ENCODE measurements at regions of chr19 and their contacts with region 1.

Region 1: DNA sequence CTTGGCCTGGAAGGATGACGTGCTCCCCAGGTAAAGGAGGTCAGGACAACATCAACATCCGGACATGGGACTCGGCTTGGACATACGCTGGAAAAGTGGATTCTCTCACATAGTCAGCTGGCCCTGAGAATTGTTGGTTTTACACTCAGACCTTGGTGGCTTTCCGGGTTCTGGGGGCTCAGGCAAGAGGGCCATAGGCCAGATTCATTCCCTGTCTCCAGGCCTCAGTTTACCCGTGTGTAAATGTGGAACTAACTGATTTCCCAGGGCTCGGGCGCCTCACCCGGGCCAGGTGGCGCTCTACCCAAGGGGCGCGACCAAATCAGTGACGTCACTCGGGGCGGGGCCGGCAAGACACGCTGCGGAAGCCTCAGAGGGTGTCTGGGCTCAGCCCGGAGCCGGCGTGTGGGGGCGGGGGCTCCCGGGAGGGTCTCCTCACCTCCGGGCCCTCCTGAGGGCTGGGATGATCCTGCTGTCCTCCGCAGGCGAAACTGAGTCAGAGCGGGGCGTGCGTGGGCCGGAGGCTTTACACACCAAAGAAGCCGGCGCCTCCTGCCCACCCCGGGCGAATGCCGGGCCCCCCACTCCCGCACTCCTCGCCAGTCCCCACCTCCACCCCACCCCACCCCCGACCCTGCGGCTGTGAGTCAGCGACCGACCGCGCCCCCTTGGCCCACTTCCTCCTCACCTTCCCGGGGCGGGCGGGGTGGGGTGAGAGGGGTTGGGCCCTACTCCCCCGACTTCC is 861 bp upstream of the VASP start:
- DNase-seq: peak; percentile 100
- ATAC-seq: peak; percentile 80
- H3K4me3 Mint-ChIP-seq: peak overlapping the region; percentile 85
- H3K27ac Mint-ChIP-seq: peak overlapping the region; percentile 96
- H3K4me1 Mint-ChIP-seq: peaks cover 38% of the 10 kb centered on the region
- H3K27me3 Mint-ChIP-seq: no peaks in the 10 kb centered on the region

Region 2: DNA sequence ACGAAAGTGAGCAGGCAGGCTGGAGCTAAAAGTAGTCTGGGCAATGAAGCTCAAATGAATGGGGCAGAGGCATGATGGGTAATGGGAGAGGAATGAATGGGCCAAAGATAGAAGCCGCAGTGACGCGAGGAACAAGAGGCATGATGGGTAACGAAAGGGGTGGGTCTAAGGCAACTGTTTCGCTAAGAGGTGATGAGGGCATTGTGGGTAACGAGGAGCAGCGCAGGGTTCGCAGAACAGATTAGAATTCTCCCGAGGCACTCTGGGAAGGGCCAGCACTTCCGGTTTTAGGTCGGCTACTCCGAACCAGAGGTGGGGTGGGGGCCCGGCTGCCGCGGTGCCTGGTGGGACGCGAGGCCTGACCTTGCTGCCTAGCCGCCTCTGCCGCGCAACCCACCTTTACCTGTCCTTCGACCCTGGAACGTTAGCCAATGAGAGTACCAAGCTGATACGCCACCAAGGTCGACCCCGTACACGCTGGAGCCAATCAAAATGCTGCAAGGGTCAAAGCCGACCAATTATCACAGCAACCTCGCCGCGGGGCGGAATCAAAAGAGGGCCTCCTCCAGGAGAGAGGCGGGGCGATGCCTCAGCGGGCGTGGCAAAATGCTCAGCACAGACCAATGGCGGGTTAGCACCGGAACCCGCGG is 615.9 kb before region 1 on chr19:
- CTCF ChIA-PET with region 1: no interaction called
- POLR2A ChIA-PET with region 1: no interaction called
- intact Hi-C with region 1: loop called in 1 of 2 experiments (anchors 5 kb)
- DNase-seq: no peak
- ATAC-seq: peak; percentile 84
- H3K4me3 Mint-ChIP-seq: peak overlapping the region; percentile 74
- H3K27ac Mint-ChIP-seq: peak overlapping the region; percentile 96
- H3K4me1 Mint-ChIP-seq: peaks cover 29% of the 10 kb centered on the region
- H3K27me3 Mint-ChIP-seq: no peaks in the 10 kb centered on the region

Region 3: GRCh38 chr19:45424191-45425058 is 82.0 kb before region 1 on chr19:
- CTCF ChIA-PET with region 1: no interaction called
- POLR2A ChIA-PET with region 1: no interaction called
- intact Hi-C with region 1: no loop called
- DNase-seq: peak; percentile 68
- ATAC-seq: peak; percentile 67
- H3K4me3 Mint-ChIP-seq: peak overlapping the region; percentile 92
- H3K27ac Mint-ChIP-seq: peak overlapping the region; percentile 95
- H3K4me1 Mint-ChIP-seq: peaks cover 52% of the 10 kb centered on the region
- H3K27me3 Mint-ChIP-seq: peaks cover 2% of the 10 kb centered on the region

Region 4: GRCh38 chr19:45439569-45440254 is 66.7 kb before region 1 on chr19:
- CTCF ChIA-PET with region 1: interaction called, 13 read pairs
- POLR2A ChIA-PET with region 1: no interaction called
- intact Hi-C with region 1: no loop called
- DNase-seq: peak; percentile 90
- ATAC-seq: peak; percentile 70
- H3K4me3 Mint-ChIP-seq: peak overlapping the region; percentile 56
- H3K27ac Mint-ChIP-seq: peak overlapping the region; percentile 63
- H3K4me1 Mint-ChIP-seq: peaks cover 33% of the 10 kb centered on the region
- H3K27me3 Mint-ChIP-seq: no peaks in the 10 kb centered on the region

Region 5: DNA sequence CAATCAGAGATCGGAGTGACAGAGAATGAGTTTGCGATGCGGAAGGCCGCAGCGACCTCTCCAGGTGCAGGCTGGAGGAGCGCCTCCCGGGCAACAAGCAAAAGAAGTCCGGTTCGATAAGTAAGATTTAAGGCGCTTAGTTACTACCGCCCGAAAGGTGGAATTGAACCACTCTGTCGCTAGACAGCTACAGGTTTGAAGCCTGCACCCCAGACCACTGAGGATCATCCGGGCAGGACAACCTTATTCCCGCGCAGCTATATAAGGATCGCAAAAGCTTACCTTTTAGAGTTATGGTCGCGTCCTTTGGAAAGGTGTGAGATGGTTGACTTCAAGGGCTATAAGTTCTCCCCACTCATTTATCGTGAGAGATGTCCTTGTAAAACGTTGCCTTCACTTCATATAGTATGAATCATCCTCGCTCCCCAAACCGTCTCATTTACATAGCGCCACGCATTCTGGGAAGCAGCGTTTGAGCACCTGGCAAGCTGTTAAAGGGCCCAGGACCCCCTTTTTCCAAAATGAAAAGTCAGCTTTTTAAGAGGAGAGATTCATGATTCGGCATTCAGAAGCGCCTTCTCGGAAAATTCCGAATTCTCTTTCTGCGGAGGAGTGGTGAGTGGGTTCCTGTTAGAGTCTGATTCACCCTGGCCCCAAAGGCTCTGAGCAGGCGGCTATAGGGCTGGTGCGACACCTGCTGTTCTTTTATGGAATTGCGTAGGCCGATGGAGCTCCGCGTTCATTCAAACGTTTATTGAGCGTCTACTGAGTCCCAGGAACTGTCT is 27.8 kb before region 1 on chr19:
- CTCF ChIA-PET with region 1: interaction called, 5 read pairs
- POLR2A ChIA-PET with region 1: no interaction called
- intact Hi-C with region 1: loop called in 1 of 2 experiments (anchors 1 kb)
- DNase-seq: peak; percentile 95
- ATAC-seq: peak; percentile 86
- H3K4me3 Mint-ChIP-seq: peak overlapping the region; percentile 60
- H3K27ac Mint-ChIP-seq: peak overlapping the region; percentile 73
- H3K4me1 Mint-ChIP-seq: peaks cover 24% of the 10 kb centered on the region
- H3K27me3 Mint-ChIP-seq: peaks cover 4% of the 10 kb centered on the region

Region 6: DNA sequence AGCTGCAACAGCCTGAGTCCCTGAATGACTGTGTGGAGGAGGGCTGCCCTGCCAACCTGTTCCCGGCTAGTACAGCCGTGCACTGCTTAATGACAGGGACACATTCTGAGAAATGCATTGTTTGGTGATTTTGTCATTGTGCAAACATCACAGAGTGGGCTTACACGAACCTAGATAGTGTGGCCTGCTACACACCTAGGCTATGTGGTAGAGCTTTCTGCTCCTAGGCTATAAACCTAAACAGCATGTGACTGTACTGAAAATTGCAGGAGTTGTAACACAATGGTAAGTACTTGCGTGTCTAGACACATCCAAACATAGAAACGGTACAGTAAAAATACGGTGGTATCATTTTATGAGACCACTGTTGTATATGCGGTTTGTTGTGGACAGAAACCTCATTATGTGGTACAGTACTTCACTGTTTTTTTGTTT is 35.8 kb after region 1 on chr19:
- CTCF ChIA-PET with region 1: no interaction called
- POLR2A ChIA-PET with region 1: no interaction called
- intact Hi-C with region 1: no loop called
- DNase-seq: no peak
- ATAC-seq: no peak
- H3K4me3 Mint-ChIP-seq: no peak overlapping the region
- H3K27ac Mint-ChIP-seq: no peak overlapping the region
- H3K4me1 Mint-ChIP-seq: peaks cover 6% of the 10 kb centered on the region
- H3K27me3 Mint-ChIP-seq: no peaks in the 10 kb centered on the region

Region 7: DNA sequence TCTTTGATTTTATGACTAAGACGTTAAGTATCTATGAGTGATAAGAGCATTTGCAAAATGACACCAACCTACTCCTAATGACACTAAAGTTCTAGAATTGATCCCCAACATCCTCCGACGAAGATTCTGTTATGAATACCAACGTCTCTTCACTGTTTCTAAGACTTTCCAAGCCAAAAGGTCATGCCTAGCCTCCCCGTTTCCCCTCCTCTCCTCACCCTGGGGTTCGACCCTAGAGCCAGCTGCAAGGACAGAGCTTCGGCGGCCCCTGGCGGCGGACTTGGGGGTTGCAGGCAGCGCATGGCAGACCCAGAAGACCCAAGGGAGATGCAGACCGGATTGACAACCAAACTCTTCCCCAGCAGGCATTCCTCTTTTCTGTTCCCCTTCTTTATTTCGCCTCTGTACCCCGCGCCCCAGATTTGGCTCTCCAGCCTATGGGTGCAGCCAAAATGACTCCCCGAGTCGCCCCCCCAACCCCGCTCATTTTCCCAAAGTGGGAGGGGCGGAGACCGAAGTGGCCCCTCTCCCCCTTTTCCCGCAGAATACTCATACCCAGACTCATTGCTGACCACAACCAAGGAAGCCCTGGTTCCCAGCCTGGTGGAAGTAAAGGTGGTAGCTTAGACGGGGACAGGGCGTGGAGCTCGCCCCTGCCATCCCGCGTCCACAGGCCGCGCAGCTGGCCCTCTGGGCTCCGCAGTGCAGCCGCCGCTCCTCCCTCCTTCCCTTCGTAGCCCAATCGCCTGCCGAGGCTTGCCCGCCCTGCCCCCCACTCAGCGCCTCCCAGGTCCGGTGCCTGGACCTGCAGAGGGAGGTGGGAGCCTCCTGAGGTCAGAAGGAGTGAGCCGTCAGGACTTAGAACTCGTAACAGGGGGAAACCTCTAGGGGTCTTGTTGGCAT is 136.9 kb after region 1 on chr19:
- CTCF ChIA-PET with region 1: interaction called, 6 read pairs
- POLR2A ChIA-PET with region 1: interaction called, 4 read pairs
- intact Hi-C with region 1: loop called (anchors 1 to 5 kb)
- DNase-seq: peak; percentile 97
- ATAC-seq: peak; percentile 54
- H3K4me3 Mint-ChIP-seq: peak overlapping the region; percentile 94
- H3K27ac Mint-ChIP-seq: peak overlapping the region; percentile 93
- H3K4me1 Mint-ChIP-seq: peaks cover 57% of the 10 kb centered on the region
- H3K27me3 Mint-ChIP-seq: no peaks in the 10 kb centered on the region

Region 8: DNA sequence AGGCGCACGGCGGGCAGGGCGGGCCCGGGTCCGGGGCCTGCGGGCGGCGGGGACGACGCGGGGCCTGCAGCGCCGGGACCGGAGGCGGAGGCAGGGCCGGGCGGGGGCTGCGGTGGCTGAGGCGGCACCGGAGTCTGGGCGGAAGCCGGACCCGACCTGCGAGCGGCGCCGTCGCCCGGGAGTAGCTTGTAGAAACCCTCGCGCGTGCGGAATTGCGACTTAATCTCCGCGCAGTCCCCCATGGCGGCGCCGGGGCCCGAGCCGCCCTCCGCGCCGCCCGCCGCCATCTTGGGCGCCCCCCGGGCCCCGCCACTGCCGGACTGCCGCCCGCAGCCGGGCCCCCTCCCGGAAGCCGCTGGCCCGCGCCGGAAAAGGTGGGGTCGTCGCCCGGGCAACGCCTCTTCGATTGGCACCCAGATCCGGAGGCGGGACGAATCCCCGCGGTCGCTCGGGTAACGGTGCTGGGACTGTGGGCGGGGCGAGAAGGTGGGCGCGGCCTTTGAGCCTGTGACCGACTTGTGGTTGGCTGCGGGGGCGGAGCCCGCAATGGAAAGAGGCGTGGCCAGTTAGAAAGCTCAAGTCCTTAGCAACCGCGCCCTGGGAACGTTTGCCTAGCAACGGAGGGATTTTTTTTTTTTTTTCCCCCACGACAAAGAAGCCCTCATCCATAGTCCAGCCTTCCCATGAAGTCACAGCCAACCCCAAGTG is 286.2 kb after region 1 on chr19 and contains the start of gene DMWD:
- CTCF ChIA-PET with region 1: no interaction called
- POLR2A ChIA-PET with region 1: no interaction called
- intact Hi-C with region 1: loop called in 1 of 2 experiments (anchors 1 kb)
- DNase-seq: peak; percentile 100
- ATAC-seq: peak; percentile 93
- H3K4me3 Mint-ChIP-seq: peak within 1 kb of the TSS; percentile 95
- H3K27ac Mint-ChIP-seq: peak within 1 kb of the TSS; percentile 75
- H3K4me1 Mint-ChIP-seq: peaks cover 30% of the 10 kb centered on the region
- H3K27me3 Mint-ChIP-seq: peaks cover 16% of the 10 kb centered on the region
- total RNA-seq, gene DMWD: 31.1 to 35.1 TPM

Region 9: DNA sequence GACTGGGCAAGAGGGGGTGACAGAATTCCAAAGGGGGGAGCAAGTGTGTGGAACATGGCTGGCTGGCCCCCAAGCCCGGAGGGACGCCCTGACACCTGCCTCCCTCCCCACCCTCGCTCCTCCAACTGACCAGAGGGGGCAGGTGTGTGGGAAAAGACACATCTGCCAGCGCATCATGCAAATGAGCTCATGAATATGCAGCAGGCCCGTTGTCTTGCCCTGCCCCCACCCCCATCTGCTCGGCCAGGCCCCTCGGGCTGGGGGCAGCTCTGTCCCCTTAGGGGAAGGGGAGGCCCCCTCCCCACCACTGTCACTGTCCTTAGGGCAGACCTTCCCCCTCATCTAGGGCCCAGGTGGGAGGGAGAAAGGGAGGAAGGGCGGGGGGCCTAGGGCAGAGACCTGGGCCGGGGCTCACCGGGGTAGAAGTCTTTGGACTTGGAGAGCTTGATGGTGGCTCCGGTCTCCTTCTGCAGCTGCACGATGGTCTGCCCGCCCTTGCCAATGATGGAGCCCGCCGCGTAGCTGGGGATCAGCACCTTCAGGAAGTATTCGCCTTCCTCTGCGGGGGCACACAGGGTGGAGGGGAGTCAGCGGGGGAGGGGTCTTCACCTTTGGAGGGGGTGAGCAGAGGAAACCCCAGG is 454.3 kb after region 1 on chr19:
- CTCF ChIA-PET with region 1: no interaction called
- POLR2A ChIA-PET with region 1: no interaction called
- intact Hi-C with region 1: no loop called
- DNase-seq: no peak
- ATAC-seq: no peak
- H3K4me3 Mint-ChIP-seq: no peak overlapping the region
- H3K27ac Mint-ChIP-seq: no peak overlapping the region
- H3K4me1 Mint-ChIP-seq: no peaks in the 10 kb centered on the region
- H3K27me3 Mint-ChIP-seq: peaks cover 38% of the 10 kb centered on the region